Activated naive CD4-positive, alpha-beta T cell treated with anti-CD3 and anti-CD28 coated beads, Interleukin-2, amount 10 ng/mL, durations not matched to agents 7 days and 5 days (primary cell): ENCODE measurements at regions of chr14 and their contacts with region 1.

Region 1: DNA sequence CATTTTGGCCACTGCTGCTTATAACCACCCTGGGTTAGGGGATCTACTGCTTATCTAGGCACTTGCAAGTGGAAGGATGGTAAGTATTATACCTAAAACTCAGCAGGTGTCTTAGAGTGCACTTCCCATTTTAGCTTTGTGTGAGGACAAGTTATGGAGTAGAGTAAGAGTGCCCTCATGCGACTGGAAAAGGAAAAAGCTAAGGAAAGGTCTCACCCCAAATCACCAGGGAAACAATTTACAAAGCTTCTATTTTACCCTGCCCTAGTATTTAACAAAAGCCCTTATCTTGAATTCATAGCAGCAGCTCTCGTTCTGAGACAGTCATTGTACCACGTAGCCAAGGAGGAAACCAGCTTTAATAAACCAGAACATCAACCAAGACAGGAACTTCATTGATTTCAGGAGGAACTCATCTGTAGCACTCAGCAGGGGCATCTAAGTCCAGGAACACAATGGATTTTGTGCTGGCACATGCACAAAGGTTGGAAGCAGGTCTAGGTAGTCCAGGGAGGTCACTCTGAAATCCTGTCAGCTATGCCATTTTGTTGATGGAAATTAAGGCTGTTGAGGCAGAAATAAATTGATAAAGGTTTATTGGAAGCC is 2.9 kb downstream of the RDH12 start:
- DNase-seq: peak; percentile 50
- H3K4me3 Mint-ChIP-seq: no peak overlapping the region
- H3K27ac Mint-ChIP-seq: no peak overlapping the region
- H3K4me1 Mint-ChIP-seq: no peaks in the 10 kb centered on the region
- H3K27me3 Mint-ChIP-seq: peaks cover 4% of the 10 kb centered on the region

Region 2: DNA sequence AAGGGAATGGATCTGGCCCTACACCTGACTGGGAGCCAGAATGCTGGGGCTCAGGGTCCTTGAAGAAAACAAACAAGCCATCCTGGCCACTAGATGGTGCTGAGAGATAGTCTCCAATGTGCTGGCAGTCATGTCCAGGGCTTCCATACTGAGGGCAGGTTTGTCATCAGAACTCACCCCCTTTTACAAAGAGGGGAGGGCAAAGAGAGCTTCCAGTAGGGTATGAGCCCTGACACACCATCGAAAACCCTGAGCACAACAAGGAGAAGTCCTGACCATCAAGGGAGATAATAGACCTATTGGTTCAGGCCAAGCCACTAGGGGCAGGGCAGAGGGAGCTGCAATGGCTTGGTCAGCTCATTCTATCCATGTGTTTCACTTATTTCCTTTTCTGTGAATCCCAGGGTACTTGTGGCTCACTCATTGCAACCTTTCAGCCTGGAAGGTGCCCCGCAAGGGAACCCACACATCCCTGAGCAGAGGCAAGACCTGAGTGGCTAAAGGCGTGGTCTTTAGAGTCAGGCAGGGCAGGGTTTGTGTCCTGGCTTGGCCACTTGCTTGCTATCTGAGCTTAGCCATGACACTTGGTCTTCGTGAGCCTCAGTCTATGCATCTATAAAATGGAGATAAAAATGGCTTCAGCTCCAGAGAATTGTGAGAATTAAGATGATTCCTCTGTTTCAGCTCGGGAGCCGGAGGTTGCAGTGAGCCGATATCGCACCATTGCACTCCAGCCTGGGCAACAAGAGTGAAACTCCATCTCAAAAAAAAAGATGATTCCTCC is 177.7 kb before region 1 on chr14:
- CTCF ChIA-PET with region 1: interaction called, 33 read pairs
- DNase-seq: peak; percentile 63
- H3K4me3 Mint-ChIP-seq: no peak overlapping the region
- H3K27ac Mint-ChIP-seq: no peak overlapping the region
- H3K4me1 Mint-ChIP-seq: no peaks in the 10 kb centered on the region
- H3K27me3 Mint-ChIP-seq: peaks cover 88% of the 10 kb centered on the region

Region 3: GRCh38 chr14:67583711-67584644 is 120.6 kb before region 1 on chr14:
- CTCF ChIA-PET with region 1: interaction called, 51 read pairs
- DNase-seq: peak; percentile 55
- H3K4me3 Mint-ChIP-seq: no peak overlapping the region
- H3K27ac Mint-ChIP-seq: no peak overlapping the region
- H3K4me1 Mint-ChIP-seq: peaks cover 12% of the 10 kb centered on the region
- H3K27me3 Mint-ChIP-seq: no peaks in the 10 kb centered on the region

Region 4: DNA sequence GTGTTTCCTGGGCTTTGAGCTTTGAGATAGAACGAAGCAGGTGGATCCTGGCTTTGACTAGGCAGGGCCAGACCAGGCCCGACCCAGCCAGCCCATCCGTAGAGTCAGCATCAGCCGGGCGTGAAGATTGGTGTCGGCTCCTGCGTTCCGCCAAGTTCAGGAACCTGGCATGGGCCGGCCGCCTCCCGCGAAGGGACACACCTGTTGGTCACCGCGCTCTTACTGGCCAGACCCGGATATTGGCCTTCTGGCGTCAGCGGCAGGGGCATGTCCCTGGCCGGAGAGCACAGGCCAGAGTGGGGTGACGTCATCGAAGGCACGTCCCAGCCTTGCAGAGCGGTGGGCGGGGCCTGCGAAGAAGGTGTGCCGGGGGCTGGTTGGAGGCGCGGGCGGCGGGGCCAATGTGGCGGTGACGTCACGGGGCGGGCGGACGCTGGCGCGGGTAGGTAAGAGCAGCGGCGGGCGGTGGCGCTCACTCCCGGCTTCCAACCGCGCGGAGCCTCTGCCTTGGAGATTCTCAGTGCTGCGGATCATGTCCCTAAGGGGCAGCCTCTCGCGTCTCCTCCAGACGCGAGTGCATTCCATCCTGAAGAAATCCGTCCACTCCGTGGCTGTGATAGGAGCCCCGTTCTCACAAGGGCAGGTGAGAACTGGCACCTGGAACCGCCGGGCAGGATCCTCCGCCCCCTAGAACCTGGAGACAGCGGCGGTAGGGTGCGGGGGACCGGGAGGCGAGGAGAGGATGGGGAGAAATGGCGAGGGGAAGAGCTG is 85.0 kb before region 1 on chr14 and contains the start of gene ARG2:
- CTCF ChIA-PET with region 1: interaction called, 58 read pairs
- DNase-seq: peak; percentile 98
- H3K4me3 Mint-ChIP-seq: peak within 1 kb of the TSS; percentile 77
- H3K27ac Mint-ChIP-seq: peak within 1 kb of the TSS; percentile 68
- H3K4me1 Mint-ChIP-seq: peaks cover 35% of the 10 kb centered on the region
- H3K27me3 Mint-ChIP-seq: peaks cover 24% of the 10 kb centered on the region

Region 5: GRCh38 chr14:67674481-67675169 is 30.0 kb before region 1 on chr14 and contains the start of gene VTI1B:
- CTCF ChIA-PET with region 1: interaction called, 11 read pairs
- DNase-seq: peak; percentile 83
- H3K4me3 Mint-ChIP-seq: peak within 1 kb of the TSS; percentile 91
- H3K27ac Mint-ChIP-seq: peak within 1 kb of the TSS; percentile 92
- H3K4me1 Mint-ChIP-seq: peaks cover 30% of the 10 kb centered on the region
- H3K27me3 Mint-ChIP-seq: no peaks in the 10 kb centered on the region